GM10248 (cell line): ENCODE measurements at regions of chr12 and their contacts with region 1.

Region 1: DNA sequence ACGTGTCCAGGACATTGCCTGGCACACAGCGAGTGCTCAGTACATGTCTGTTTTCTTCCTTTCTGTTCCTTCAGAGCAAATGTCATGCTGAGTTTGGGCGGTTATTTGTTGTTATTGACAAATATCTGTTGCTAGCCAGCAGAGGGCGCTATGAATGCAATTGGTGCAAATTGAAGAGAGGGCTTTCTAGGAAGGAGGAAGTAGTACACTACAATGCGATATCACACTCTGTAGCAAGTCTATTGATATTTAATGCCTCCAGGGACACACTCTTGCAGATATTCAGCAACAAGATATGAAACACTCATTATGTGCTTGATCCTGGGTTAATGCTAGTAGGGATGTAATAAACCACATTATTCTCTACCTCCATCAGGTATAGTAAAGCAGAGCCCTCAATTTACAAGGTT is 267.3 kb upstream of the SRRM4 start:
- DNase-seq: peak; percentile 51
- CTCF ChIP-seq: peak; percentile 46

Region 2: GRCh38 chr12:118727196-118727978 is 13.3 kb after region 1 on chr12:
- CTCF ChIA-PET with region 1: interaction called, 16 read pairs
- POLR2A ChIA-PET with region 1: no interaction called
- DNase-seq: no peak
- CTCF ChIP-seq: no peak

Region 3: GRCh38 chr12:118922405-118922804 is 208.3 kb after region 1 on chr12:
- CTCF ChIA-PET with region 1: no interaction called
- POLR2A ChIA-PET with region 1: no interaction called
- DNase-seq: no peak
- CTCF ChIP-seq: no peak